ENCODE measurements at regions of chr11 and their contacts with region 1.

Region 1: GRCh38 chr11:128630367-128631230 is 43.2 kb upstream of the ETS1 start:
- DNase-seq: peak; percentile 71 to 81 (median 80)
- ATAC-seq: peak; percentile 97
- H3K4me3 ChIP-seq: no peak overlapping the region
- H3K27ac ChIP-seq: no peak overlapping the region
- H3K4me1 ChIP-seq: no peaks in the 10 kb centered on the region
- H3K27me3 ChIP-seq: no peaks in the 10 kb centered on the region
- CTCF ChIP-seq: peak; percentile 74 to 89 (median 78)
- EP300 ChIP-seq: no peak
- POLR2A ChIP-seq: no peak
- RAD21 ChIP-seq: peak; percentile 93 to 97

Region 2: GRCh38 chr11:128026596-128026995 is 604.0 kb before region 1 on chr11:
- CTCF ChIA-PET with region 1: no interaction called
- POLR2A ChIA-PET with region 1: no interaction called
- in situ Hi-C with region 1: loop called (anchors 25 kb)
- intact Hi-C with region 1: loop called (anchors 1 kb)
- DNase-seq: no peak
- ATAC-seq: no peak
- H3K4me3 ChIP-seq: no peak overlapping the region
- H3K27ac ChIP-seq: no peak overlapping the region
- H3K4me1 ChIP-seq: no peaks in the 10 kb centered on the region
- H3K27me3 ChIP-seq: no peaks in the 10 kb centered on the region
- CTCF ChIP-seq: no peak
- EP300 ChIP-seq: no peak
- POLR2A ChIP-seq: no peak
- RAD21 ChIP-seq: no peak

Region 3: DNA sequence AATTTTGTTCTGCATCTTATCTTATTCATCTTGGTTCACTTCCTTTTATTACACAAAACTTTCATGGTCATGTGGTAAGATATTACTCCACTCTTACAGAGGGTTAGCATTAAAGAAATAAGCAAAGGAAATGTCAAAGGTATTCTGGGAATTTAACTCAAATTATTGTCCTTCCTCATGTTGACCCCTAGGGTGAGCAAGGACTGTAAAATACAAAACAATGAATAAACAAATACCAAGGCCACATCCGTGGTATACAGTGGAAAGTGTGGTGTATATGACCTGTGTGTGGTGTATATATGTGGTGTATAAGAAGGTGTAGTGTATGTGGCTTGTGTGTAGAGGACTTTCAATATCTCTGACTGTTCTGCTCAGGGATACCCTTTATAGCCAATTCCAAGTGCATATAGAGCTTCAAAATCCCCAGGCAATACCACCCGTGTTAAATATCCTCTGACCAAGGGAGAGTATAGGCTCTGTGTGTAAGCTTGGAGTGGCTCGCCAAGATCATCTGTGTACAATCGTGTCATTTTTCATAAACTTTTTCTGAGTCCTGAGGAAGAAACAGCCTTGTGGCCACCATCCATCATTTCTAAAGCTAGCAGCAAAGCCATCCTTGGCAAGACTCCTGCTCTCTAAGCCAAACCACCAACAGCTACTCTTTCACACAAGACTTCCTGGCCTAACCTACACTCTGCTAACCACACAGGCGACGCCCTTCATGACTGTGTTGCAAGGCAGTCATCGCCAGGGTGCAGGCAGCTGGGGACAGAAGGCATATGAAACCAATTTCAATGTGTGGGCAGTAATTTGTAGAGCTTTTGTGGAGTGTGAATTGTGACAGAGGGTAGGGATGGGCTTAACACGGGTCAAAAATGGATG is 591.2 kb before region 1 on chr11:
- CTCF ChIA-PET with region 1: no interaction called
- POLR2A ChIA-PET with region 1: no interaction called
- in situ Hi-C with region 1: loop called (anchors 25 kb)
- intact Hi-C with region 1: no loop called
- DNase-seq: no peak
- ATAC-seq: no peak
- H3K4me3 ChIP-seq: no peak overlapping the region
- H3K27ac ChIP-seq: no peak overlapping the region
- H3K4me1 ChIP-seq: no peaks in the 10 kb centered on the region
- H3K27me3 ChIP-seq: no peaks in the 10 kb centered on the region
- CTCF ChIP-seq: no peak
- EP300 ChIP-seq: no peak
- POLR2A ChIP-seq: no peak
- RAD21 ChIP-seq: no peak

Region 4: DNA sequence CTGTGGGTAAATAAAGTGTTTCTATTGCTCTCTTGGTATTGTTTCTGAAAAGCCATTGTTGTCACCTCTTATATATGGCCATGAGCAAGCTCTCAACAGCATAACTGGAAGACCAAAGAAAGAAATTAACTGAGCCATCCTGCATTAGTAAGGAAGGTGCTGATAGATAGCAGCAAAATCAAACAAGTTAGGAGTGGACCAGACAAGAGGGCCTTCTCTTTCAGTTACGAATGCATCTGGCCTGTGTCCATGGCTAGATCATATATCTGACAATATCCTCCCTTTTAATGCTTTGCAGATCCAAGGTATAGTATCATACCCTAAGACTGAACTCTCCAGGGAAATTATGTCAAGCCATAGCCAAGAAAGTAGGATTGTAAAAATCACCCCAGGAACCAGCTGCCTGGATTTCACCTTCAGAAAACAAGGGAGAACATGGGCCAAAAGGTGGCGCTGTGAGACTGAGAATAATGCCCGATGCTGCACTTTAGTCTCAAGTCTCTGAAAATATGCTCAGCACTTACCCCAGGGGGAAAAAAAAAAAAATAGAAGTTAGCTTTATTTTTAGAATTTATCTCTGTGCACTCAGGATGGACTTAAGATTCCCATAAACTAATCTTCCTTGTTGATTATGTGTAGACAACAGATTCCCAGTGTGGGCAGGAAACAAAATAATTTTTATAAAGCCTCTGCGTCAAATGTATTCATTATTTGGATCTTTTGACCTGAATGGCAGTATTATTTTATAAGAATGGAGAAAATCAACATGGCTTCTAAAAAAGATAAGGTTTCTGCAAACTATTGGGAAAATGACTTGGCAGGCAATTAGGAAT is 458.3 kb before region 1 on chr11:
- CTCF ChIA-PET with region 1: interaction called, 3 read pairs
- POLR2A ChIA-PET with region 1: no interaction called
- in situ Hi-C with region 1: loop called (anchors 10 kb)
- intact Hi-C with region 1: loop called (anchors 1 kb)
- DNase-seq: peak; percentile 14 to 73 (median 30)
- ATAC-seq: peak; percentile 88
- H3K4me3 ChIP-seq: no peak overlapping the region
- H3K27ac ChIP-seq: no peak overlapping the region
- H3K4me1 ChIP-seq: no peaks in the 10 kb centered on the region
- H3K27me3 ChIP-seq: no peaks in the 10 kb centered on the region
- CTCF ChIP-seq: peak; percentile 65 to 81 (median 66)
- EP300 ChIP-seq: no peak
- POLR2A ChIP-seq: no peak
- RAD21 ChIP-seq: peak; percentile 75 to 76

Region 5: DNA sequence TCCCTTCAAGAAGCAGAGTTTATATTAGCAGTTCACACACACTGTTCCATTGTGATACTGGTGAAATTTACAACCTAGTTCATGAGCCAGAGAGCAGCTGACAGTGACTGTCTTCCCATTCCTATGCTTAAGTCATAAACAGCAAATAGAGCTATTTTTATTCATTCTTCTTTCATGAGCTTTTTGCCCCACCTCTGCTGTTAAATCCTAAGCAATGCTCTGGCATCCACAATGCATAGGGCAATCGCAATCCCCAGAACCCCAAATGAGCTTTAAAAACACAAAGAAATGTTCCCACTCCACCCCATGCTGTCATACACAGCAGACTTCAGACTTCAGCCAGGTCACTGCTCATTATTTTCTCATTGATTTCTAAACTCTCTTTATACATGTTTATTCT is 350.7 kb before region 1 on chr11:
- CTCF ChIA-PET with region 1: no interaction called
- POLR2A ChIA-PET with region 1: no interaction called
- in situ Hi-C with region 1: loop called (anchors 10 kb)
- intact Hi-C with region 1: no loop called
- DNase-seq: no peak
- ATAC-seq: no peak
- H3K4me3 ChIP-seq: no peak overlapping the region
- H3K27ac ChIP-seq: no peak overlapping the region
- H3K4me1 ChIP-seq: no peaks in the 10 kb centered on the region
- H3K27me3 ChIP-seq: no peaks in the 10 kb centered on the region
- CTCF ChIP-seq: no peak
- EP300 ChIP-seq: no peak
- POLR2A ChIP-seq: no peak
- RAD21 ChIP-seq: no peak

Region 6: GRCh38 chr11:128290106-128290840 is 340.3 kb before region 1 on chr11:
- CTCF ChIA-PET with region 1: interaction called, 3 read pairs
- POLR2A ChIA-PET with region 1: interaction called, 5 read pairs
- in situ Hi-C with region 1: loop called (anchors 10 kb)
- intact Hi-C with region 1: loop called (anchors 1 kb)
- DNase-seq: peak; percentile 35 to 48 (median 47)
- ATAC-seq: peak; percentile 81
- H3K4me3 ChIP-seq: no peak overlapping the region
- H3K27ac ChIP-seq: no peak overlapping the region
- H3K4me1 ChIP-seq: no peaks in the 10 kb centered on the region
- H3K27me3 ChIP-seq: no peaks in the 10 kb centered on the region
- CTCF ChIP-seq: peak; percentile 34 to 62 (median 54); a peak in 4 of 6 replicates
- EP300 ChIP-seq: no peak
- POLR2A ChIP-seq: no peak
- RAD21 ChIP-seq: peak; percentile 81 to 86

Region 7: GRCh38 chr11:128831174-128832120 is 200.8 kb after region 1 on chr11:
- CTCF ChIA-PET with region 1: no interaction called
- POLR2A ChIA-PET with region 1: no interaction called
- in situ Hi-C with region 1: no loop called
- intact Hi-C with region 1: loop called (anchors 2 kb)
- DNase-seq: peak; percentile 62 to 76 (median 71)
- ATAC-seq: peak; percentile 98
- H3K4me3 ChIP-seq: no peak overlapping the region
- H3K27ac ChIP-seq: no peak overlapping the region
- H3K4me1 ChIP-seq: no peaks in the 10 kb centered on the region
- H3K27me3 ChIP-seq: no peaks in the 10 kb centered on the region
- CTCF ChIP-seq: peak; percentile 70 to 84 (median 80)
- EP300 ChIP-seq: no peak
- POLR2A ChIP-seq: no peak
- RAD21 ChIP-seq: peak; percentile 76 to 80